CD8-positive, alpha-beta T cell (primary cell): ENCODE measurements at regions of chr12 and their contacts with region 1.

Region 1: GRCh38 chr12:51424662-51425438 is at the start of gene SLC4A8:
- DNase-seq: peak; percentile 46 to 88 (median 71)
- ATAC-seq: peak; percentile 81
- H3K4me3 ChIP-seq: peak within 1 kb of the TSS; percentile 68 to 82
- H3K4me3 Mint-ChIP-seq: peak within 1 kb of the TSS; percentile 82
- H3K27ac ChIP-seq: peak within 1 kb of the TSS in 1 of 2 experiments; percentile 28
- H3K27ac Mint-ChIP-seq: no peak within 1 kb of the TSS
- H3K4me1 ChIP-seq: peaks cover 5% of the 10 kb centered on the region
- H3K4me1 Mint-ChIP-seq: peaks cover 16% of the 10 kb centered on the region
- H3K27me3 ChIP-seq: no peaks in the 10 kb centered on the region
- H3K27me3 Mint-ChIP-seq: no peaks in the 10 kb centered on the region
- CTCF ChIP-seq: peak; percentile 63
- total RNA-seq, gene SLC4A8: 1.5 to 2.4 TPM

Region 2: DNA sequence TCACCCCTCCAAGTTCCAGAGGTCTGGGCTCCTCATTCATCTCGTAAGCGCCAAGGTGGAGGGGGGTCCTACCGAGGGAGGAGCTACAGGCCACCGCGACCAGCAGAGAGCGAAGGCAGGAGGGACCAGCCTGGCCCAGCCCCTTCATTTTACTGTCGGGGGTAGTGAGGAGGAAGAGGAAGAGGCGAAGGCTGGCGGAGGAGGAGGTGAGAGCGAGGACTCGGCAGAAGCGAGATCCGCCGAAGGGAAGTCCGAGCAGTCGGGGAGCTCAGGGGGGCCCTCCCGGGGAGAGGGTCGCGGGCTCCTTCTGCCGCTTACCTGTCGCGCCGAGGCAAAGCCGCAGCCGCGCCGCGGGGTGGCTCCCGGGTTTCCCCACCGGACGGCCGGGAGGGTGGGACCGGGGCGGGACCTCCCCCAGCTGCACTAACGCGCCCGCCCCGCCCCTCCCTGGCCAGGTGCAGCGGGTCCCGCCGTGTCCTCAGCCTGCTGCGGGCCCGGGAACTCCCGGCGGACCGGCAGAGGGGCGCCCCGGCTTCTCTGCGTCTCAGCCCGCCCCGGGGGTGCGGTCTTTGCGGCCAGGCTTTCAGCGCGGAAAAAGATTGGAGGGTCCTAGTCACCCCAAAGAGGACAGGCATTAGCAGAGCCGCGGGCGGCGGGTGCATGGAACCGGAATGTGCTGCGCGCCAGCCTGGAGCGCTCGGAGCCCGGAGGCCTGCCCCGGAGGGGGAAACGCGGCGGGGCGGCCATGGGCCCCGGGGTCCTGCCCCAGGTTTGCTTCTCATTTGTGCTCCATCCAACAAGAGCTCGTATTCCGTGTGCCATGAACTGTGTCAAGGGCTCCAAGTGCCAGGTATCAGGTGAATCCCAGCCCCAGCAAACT is 33.3 kb before region 1 on chr12 and contains the start of gene GALNT6:
- CTCF ChIA-PET with region 1: interaction called, 6 read pairs
- POLR2A ChIA-PET with region 1: interaction called, 3 read pairs
- intact Hi-C with region 1: loop called in 1 of 2 experiments (anchors 5 kb)
- DNase-seq: peak; percentile 32 to 88 (median 73)
- ATAC-seq: peak; percentile 53
- H3K4me3 ChIP-seq: peak within 1 kb of the TSS; percentile 65 to 75
- H3K4me3 Mint-ChIP-seq: peak within 1 kb of the TSS; percentile 91
- H3K27ac ChIP-seq: peak within 1 kb of the TSS; percentile 41 to 69
- H3K27ac Mint-ChIP-seq: peak within 1 kb of the TSS; percentile 89
- H3K4me1 ChIP-seq: peaks cover 65% of the 10 kb centered on the region
- H3K4me1 Mint-ChIP-seq: peaks cover 75% of the 10 kb centered on the region
- H3K27me3 ChIP-seq: no peaks in the 10 kb centered on the region
- H3K27me3 Mint-ChIP-seq: no peaks in the 10 kb centered on the region
- CTCF ChIP-seq: no peak
- total RNA-seq, gene GALNT6: 10.8 to 13.4 TPM

Region 3: DNA sequence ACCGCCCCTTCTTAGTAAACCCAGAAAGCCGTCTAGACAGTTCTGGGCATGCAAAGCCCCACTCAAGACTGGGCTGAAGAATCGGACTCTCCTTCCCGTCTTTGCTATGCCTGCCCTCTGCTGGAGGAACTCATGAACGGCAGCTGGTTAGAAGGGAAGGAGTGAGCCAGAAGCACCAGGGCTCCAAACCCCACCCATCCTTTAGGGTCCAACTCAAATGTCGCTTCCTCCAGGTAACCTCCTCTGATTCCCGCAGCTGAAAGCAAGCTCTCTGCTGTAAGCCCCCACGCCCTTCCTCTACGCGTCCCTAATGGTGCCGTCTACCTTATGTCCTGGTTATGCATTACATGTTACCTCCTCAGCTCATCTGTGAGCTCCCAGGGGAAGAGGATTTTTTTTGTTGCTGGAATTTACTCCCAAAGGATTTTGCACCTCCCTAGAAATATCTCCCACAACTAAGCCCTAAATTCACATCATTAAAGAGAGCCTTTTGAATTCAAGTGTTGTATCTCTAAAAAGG is 107.2 kb after region 1 on chr12:
- CTCF ChIA-PET with region 1: interaction called, 66 read pairs
- POLR2A ChIA-PET with region 1: no interaction called
- intact Hi-C with region 1: loop called (anchors 1 kb)
- DNase-seq: peak; percentile 49 to 84 (median 73)
- ATAC-seq: peak; percentile 89
- H3K4me3 ChIP-seq: no peak overlapping the region
- H3K4me3 Mint-ChIP-seq: no peak overlapping the region
- H3K27ac ChIP-seq: no peak overlapping the region
- H3K27ac Mint-ChIP-seq: no peak overlapping the region
- H3K4me1 ChIP-seq: no peaks in the 10 kb centered on the region
- H3K4me1 Mint-ChIP-seq: peaks cover 7% of the 10 kb centered on the region
- H3K27me3 ChIP-seq: no peaks in the 10 kb centered on the region
- H3K27me3 Mint-ChIP-seq: peaks cover 2% of the 10 kb centered on the region
- CTCF ChIP-seq: peak; percentile 82

Region 4: DNA sequence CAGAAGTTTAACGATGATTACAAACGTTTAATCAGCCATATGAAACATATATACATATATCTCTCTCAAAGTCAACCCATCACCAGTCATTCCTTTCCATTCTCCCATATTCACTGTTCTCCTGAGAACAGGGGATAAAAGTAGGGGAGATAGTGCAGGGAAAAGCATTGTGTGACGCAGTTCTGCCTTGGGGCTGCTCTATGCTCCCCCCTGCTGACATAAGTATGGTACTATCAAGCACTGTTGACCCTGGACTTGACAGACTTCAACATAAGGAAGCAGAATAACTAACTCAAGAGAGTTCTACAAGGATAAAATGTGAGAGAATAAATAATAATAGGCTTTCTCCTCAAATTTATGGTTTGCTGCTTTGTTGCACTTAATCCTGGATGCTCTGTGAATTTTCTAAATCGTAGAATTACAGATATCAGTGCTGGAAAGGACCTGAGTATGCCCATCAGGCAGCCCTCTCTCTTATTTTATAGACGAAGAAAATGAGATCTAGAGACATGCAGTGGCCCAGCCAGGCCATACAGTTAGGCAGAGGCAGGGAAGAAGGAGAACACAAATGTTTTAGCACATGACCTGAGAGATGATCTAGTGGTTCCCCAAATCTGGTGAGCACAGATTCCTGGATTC is 253.4 kb after region 1 on chr12:
- CTCF ChIA-PET with region 1: no interaction called
- POLR2A ChIA-PET with region 1: no interaction called
- intact Hi-C with region 1: loop called in 1 of 2 experiments (anchors 5 kb)
- DNase-seq: peak in 4 of 9 experiments; percentile 11 to 56 (median 29)
- ATAC-seq: peak; percentile 70
- H3K4me3 ChIP-seq: no peak overlapping the region
- H3K4me3 Mint-ChIP-seq: no peak overlapping the region
- H3K27ac ChIP-seq: no peak overlapping the region
- H3K27ac Mint-ChIP-seq: no peak overlapping the region
- H3K4me1 ChIP-seq: no peaks in the 10 kb centered on the region
- H3K4me1 Mint-ChIP-seq: peaks cover 6% of the 10 kb centered on the region
- H3K27me3 ChIP-seq: no peaks in the 10 kb centered on the region
- H3K27me3 Mint-ChIP-seq: peaks cover 3% of the 10 kb centered on the region
- CTCF ChIP-seq: peak; percentile 63

Region 5: GRCh38 chr12:51871126-51871525 is 446.3 kb after region 1 on chr12:
- CTCF ChIA-PET with region 1: interaction called, 8 read pairs
- POLR2A ChIA-PET with region 1: no interaction called
- intact Hi-C with region 1: loop called in 1 of 2 experiments (anchors 1 kb)
- DNase-seq: peak in 1 of 9 experiments; percentile 25
- ATAC-seq: no peak
- H3K4me3 ChIP-seq: no peak overlapping the region
- H3K4me3 Mint-ChIP-seq: no peak overlapping the region
- H3K27ac ChIP-seq: no peak overlapping the region
- H3K27ac Mint-ChIP-seq: no peak overlapping the region
- H3K4me1 ChIP-seq: peaks cover 6% of the 10 kb centered on the region
- H3K4me1 Mint-ChIP-seq: peaks cover 11% of the 10 kb centered on the region
- H3K27me3 ChIP-seq: peaks cover 8 to 15% of the 10 kb centered on the region in 2 experiments
- H3K27me3 Mint-ChIP-seq: peaks cover 49% of the 10 kb centered on the region
- CTCF ChIP-seq: no peak